ENCODE measurements at regions of chr3 and their contacts with region 1.

Region 1: DNA sequence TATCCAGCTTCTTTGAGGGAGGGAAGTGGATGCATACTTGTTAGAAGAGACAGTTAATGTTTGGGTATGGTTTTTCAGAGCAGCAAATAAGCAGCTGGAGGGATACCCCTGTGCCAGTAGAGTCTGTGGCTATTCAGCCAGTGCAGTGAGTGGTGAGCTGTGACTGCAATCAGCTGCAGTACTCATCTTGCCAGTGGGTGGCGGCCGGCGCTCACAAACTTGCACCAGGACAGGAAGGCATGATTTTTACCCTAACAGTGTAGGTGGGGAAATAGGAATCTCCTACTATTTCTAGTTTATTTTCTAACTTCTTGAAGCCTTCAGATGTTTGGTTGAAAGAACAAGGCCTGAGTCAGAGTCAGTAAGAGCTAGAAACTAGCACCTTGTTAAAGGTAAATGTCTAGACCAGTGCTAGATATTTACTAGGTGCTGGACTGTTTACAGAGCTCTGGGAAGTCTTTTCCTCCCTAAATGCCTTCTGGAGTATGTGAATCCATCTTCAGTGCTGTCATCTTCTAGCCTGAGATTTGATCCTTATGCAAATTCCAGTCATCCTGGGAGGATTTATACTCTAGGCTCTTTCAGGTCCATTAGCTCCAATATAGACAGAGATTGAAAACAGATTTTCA is 23.6 kb downstream of the TIMP4 start:
- DNase-seq: peak; percentile 76

Region 2: DNA sequence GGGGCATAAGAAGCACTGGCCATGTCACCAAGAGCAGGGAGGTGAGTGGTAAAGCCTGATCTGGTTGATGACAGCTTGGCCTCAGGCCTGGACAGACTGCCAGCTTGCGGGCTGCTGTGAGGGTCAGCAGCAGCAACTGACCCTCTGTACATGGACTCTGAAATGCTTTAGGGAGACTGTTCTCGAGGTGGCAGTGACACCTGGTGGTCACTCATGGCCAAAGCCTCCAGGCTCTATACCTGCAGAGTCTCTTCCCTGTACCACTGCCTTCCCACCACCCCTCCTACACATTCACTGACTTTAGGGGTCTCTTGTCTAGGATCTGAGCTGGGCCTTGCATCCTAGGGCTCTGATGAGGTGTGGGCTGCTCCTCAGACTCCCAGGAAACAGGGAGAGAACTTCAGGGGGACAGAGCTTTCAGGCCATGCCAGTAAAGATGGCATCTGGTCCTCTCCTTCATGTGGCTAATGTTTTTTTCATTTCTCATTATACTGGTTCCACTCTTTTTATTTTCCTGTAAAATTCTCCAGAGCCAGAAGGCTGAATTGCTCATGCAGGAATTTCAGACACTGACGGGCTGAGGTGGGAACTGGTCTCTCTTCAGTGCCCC is 40.8 kb after region 1 on chr3:
- CTCF ChIA-PET with region 1: interaction called, 13 read pairs
- POLR2A ChIA-PET with region 1: no interaction called
- DNase-seq: peak; percentile 69

Region 3: DNA sequence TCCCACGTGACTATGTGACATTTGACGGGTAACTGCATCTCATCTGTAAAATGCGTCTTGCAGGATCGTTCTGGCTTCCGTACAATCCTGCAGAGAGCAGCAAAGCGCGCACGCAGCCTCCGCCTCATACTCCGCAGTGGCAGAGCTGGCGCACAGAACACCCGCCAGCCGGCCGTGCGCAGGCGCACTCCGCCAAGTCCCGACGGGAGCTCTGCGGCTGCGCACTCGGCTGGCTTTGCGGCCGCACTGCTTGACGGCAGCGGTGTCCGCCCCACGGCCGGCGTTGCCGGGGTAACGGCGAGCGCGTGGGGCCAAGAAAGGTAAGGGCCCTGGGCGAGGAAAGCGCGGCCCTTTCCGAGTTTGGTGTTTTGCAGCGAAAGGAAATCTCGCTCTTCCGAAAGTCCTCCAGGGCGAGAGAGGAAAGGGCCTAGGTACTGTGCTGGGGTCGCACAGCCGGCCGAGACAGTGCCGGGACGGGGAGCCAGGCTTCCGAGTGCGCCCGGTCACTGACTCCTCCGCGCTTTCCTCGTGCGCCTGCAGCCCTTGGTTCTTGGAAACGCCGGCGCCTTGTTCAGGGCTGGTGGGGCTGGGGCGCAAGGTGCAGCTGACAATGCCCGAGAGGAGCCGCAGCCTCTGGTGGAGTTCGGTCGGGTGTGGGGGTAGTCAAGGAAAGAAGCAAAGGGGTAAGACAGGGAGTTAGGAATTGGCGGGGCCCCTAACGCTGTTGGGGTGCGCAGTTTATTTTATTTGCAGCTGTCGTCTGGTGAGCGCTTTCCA is 349.2 kb after region 1 on chr3 and contains the start of gene TSEN2:
- CTCF ChIA-PET with region 1: interaction called, 28 read pairs
- POLR2A ChIA-PET with region 1: interaction called, 9 read pairs
- DNase-seq: peak; percentile 99